Activated T-helper 1 cell treated with anti-CD3 and anti-CD28 coated beads, Interleukin-12 subunit alpha, Interleukin-12 subunit beta, Interleukin-2, Interleukin-4 antibody, amounts not matched to agents 30 ng/mL and 10 ng/mL and 1 ng/mL, durations not matched to agents 14 hours and 24 hours and 36 hours (primary cell): ENCODE measurements at regions of chr18 and their contacts with region 1.

Region 1: DNA sequence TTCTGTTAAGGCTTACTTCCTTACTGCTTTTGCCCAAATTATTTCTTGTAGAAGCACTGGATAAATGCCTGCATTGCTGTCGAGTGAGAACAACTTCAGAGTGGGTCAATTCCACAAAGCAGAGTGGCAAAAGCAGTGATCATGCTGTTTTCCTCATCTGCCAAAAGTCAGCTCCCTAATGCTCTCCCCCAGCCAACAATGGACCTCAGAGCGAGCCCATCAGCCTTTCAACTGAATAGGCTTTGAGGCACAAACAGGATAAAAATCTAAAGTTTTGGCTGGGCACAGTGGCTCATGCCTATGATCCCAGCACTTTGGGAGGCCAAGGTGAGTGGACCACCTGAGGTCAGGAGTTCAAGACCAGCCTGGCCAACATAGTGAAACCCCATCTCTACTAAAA is 222.7 kb downstream of the TCF4 start:
- DNase-seq: no peak
- H3K4me3 Mint-ChIP-seq: no peak overlapping the region
- H3K27ac Mint-ChIP-seq: no peak overlapping the region
- H3K4me1 Mint-ChIP-seq: no peaks in the 10 kb centered on the region
- H3K27me3 Mint-ChIP-seq: no peaks in the 10 kb centered on the region

Region 2: GRCh38 chr18:55351980-55352714 is 13.2 kb before region 1 on chr18:
- intact Hi-C with region 1: loop called (anchors 1 kb)
- DNase-seq: no peak
- H3K4me3 Mint-ChIP-seq: no peak overlapping the region
- H3K27ac Mint-ChIP-seq: no peak overlapping the region
- H3K4me1 Mint-ChIP-seq: no peaks in the 10 kb centered on the region
- H3K27me3 Mint-ChIP-seq: peaks cover 13% of the 10 kb centered on the region

Region 3: GRCh38 chr18:55672574-55673361 is 307.4 kb after region 1 on chr18:
- intact Hi-C with region 1: no loop called
- DNase-seq: no peak
- H3K4me3 Mint-ChIP-seq: no peak overlapping the region
- H3K27ac Mint-ChIP-seq: no peak overlapping the region
- H3K4me1 Mint-ChIP-seq: no peaks in the 10 kb centered on the region
- H3K27me3 Mint-ChIP-seq: no peaks in the 10 kb centered on the region